Activated B cell treated with CpG ODN at 0.5 μM for 24 hours (primary cell): ENCODE measurements at regions of chr1 and their contacts with region 1.

Region 1: GRCh38 chr1:17207966-17208418 is 3.1 kb downstream of the PADI1 start:
- DNase-seq: peak; percentile 43
- ATAC-seq: peak; percentile 83
- H3K4me3 Mint-ChIP-seq: peak overlapping the region; percentile 42
- H3K27ac Mint-ChIP-seq: peak overlapping the region; percentile 64
- H3K4me1 Mint-ChIP-seq: peaks cover 30% of the 10 kb centered on the region
- H3K27me3 Mint-ChIP-seq: peaks cover 5% of the 10 kb centered on the region
- CTCF ChIP-seq: no peak

Region 2: GRCh38 chr1:17141441-17142197 is 66.4 kb before region 1 on chr1:
- CTCF ChIA-PET with region 1: interaction called, 3 read pairs
- POLR2A ChIA-PET with region 1: interaction called, 7 read pairs
- intact Hi-C with region 1: loop called (anchors 1 kb)
- DNase-seq: no peak
- ATAC-seq: peak; percentile 78
- H3K4me3 Mint-ChIP-seq: peak overlapping the region; percentile 72
- H3K27ac Mint-ChIP-seq: peak overlapping the region; percentile 94
- H3K4me1 Mint-ChIP-seq: peaks cover 33% of the 10 kb centered on the region
- H3K27me3 Mint-ChIP-seq: no peaks in the 10 kb centered on the region
- CTCF ChIP-seq: no peak